Esophagus muscularis mucosa (tissue), 4 donors: ENCODE measurements at regions of chr1 and their contacts with region 1.

Region 1: DNA sequence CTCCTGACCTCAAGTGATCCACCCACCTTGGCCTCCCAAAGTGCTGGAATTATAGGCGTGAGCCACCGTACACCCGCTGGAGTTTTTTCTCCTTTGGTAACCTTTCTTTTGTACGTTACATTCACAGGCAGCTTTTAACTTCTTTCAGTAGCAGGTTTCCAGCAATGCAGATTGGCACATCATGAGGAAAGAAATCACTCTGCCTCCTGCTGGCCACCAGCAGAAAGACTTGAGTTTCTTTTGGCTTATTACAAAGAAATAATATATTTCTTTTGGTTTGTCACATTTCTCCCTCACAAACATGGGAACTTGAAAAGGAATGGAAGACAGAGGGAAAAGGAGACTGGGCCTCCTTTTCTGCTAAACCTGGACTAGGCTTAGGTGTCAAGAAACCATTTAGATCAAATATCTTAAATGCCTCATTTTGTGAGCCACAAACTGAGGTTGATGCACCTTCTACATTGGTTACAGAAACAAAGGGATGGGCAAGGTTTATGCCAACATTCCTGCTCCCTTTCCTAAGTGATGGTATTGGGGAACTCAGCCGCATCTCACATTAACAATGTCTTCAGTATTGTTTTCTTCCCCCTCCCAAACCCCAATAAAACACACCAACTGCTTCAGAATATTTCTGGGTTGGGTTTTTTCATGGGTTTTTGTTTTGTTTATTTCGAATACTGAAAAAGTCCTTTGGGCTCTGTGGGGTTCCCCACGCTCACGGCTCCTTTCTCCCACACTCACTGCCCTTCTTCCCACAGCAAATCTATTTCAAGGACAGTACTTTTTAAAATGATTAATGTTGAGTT is 7.7 kb downstream of the ENSA start:
- DNase-seq: peak; percentile 92
- H3K4me3 ChIP-seq: no peak overlapping the region
- H3K27ac ChIP-seq: peak overlapping the region; percentile 70 to 78 (median 75)
- H3K4me1 ChIP-seq: peaks cover 42 to 51% (median 46%) of the 10 kb centered on the region in 4 donors
- H3K27me3 ChIP-seq: no peaks in the 10 kb centered on the region
- CTCF ChIP-seq: peak; percentile 76 to 84 (median 77)
- EP300 ChIP-seq: no peak
- POLR2A ChIP-seq: peak; percentile 8

Region 2: DNA sequence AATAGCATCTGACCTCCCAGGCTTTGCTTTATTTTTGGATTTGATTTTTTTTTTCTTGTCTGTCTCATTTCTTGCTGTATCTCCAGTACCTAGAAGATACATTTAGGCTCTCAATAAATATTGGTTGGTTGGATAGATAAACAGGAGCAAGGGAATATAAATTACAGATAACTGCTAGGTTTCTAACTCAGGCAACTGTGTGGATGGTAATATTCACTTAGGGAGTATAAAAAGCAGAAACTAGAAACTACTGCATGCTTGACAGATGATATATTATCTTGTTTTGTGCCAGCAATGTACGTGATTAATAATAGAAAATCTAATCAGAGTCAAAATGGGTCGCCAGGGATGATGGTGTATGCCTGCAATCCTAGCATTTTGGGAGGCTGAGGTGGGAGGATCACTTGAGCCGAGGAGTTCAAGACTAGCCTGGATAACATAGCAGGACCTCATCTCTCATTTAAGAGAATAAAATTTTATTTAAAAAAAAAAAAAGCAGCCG is 165.5 kb before region 1 on chr1:
- intact Hi-C with region 1: no loop called
- DNase-seq: no peak
- H3K4me3 ChIP-seq: no peak overlapping the region
- H3K27ac ChIP-seq: no peak overlapping the region
- H3K4me1 ChIP-seq: no peaks in the 10 kb centered on the region
- H3K27me3 ChIP-seq: no peaks in the 10 kb centered on the region
- CTCF ChIP-seq: no peak
- EP300 ChIP-seq: no peak
- POLR2A ChIP-seq: no peak

Region 3: DNA sequence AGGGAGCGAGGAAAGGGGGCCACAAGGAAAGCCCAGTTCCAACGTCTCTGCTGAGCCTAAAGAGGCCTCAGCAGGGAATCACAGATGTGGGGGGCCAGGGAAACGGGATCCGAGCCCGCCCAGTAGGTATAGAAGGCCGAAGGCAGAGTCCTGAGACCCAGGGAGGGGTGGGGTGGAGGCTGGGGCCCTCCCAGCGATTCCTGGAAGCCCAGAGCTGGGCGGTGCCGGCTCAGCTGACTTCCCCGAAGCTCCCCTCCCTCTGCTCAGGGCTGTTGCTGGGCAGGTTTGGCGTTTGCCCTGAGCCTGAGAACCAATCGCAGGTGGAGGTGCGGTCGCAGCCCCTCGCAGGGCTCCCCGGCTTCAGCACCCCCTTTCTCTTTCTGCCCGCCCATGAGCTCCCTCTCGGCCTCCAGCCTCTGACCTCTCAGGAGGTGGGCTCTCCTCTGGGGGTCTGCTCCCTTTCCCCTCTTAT is 59.7 kb before region 1 on chr1:
- intact Hi-C with region 1: loop called (anchors 2 kb)
- DNase-seq: peak; percentile 98
- H3K4me3 ChIP-seq: peak overlapping the region; percentile 59 to 64 (median 61)
- H3K27ac ChIP-seq: peak overlapping the region; percentile 93 to 100 (median 98)
- H3K4me1 ChIP-seq: peaks cover 76 to 95% (median 88%) of the 10 kb centered on the region in 4 donors
- H3K27me3 ChIP-seq: no peaks in the 10 kb centered on the region
- CTCF ChIP-seq: no peak
- EP300 ChIP-seq: peak; percentile 92
- POLR2A ChIP-seq: no peak